CD8-positive, alpha-beta T cell (primary cell): ENCODE measurements at regions of chr9 and their contacts with region 1.

Region 1: GRCh38 chr9:91775011-91775707 is 174.9 kb downstream of the ROR2 start:
- DNase-seq: peak; percentile 39 to 79 (median 61)
- ATAC-seq: peak; percentile 73
- H3K4me3 ChIP-seq: no peak overlapping the region
- H3K4me3 Mint-ChIP-seq: no peak overlapping the region
- H3K27ac ChIP-seq: no peak overlapping the region
- H3K27ac Mint-ChIP-seq: no peak overlapping the region
- H3K4me1 ChIP-seq: no peaks in the 10 kb centered on the region
- H3K4me1 Mint-ChIP-seq: no peaks in the 10 kb centered on the region
- H3K27me3 ChIP-seq: peaks cover 2 to 5% of the 10 kb centered on the region in 2 experiments
- H3K27me3 Mint-ChIP-seq: peaks cover 30% of the 10 kb centered on the region
- CTCF ChIP-seq: peak; percentile 74

Region 2: DNA sequence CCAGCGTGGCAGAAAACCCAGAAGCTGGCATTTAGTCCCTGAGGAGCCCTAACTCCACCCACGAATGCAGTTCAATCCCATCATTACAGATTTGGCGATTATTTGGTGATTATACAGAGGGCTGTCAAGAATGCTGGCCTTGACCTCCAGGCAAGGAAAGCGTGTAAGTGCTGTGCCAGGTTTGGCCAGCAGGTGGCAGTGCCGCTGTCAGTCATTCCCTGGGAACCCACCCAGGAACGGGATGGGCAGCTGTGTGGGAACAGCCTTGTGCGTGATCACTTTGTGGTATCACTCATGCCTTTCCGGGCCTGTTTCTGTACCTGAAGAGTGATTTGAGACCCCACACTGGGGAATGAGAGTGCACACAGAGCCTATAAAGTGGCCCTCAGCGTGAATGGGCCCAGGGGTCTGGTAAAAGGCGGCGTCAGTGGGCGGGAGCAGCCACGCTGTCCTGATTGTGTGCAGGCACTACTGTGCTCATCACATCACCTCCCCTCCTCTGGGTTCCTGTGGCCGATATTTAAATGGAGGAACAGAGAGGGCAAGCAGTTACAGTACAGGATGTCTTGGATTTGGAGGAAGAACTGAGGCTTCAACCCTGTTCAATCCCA is 40.7 kb before region 1 on chr9:
- CTCF ChIA-PET with region 1: no interaction called
- POLR2A ChIA-PET with region 1: no interaction called
- intact Hi-C with region 1: no loop called
- DNase-seq: peak; percentile 29 to 74 (median 60)
- ATAC-seq: no peak
- H3K4me3 ChIP-seq: no peak overlapping the region
- H3K4me3 Mint-ChIP-seq: no peak overlapping the region
- H3K27ac ChIP-seq: no peak overlapping the region
- H3K27ac Mint-ChIP-seq: no peak overlapping the region
- H3K4me1 ChIP-seq: no peaks in the 10 kb centered on the region
- H3K4me1 Mint-ChIP-seq: no peaks in the 10 kb centered on the region
- H3K27me3 ChIP-seq: no peaks in the 10 kb centered on the region
- H3K27me3 Mint-ChIP-seq: peaks cover 14% of the 10 kb centered on the region
- CTCF ChIP-seq: peak; percentile 98

Region 3: GRCh38 chr9:91884696-91885687 is 109.8 kb after region 1 on chr9:
- CTCF ChIA-PET with region 1: no interaction called
- POLR2A ChIA-PET with region 1: no interaction called
- intact Hi-C with region 1: loop called (anchors 5 to 10 kb)
- DNase-seq: no peak
- ATAC-seq: no peak
- H3K4me3 ChIP-seq: no peak overlapping the region
- H3K4me3 Mint-ChIP-seq: no peak overlapping the region
- H3K27ac ChIP-seq: no peak overlapping the region
- H3K27ac Mint-ChIP-seq: no peak overlapping the region
- H3K4me1 ChIP-seq: no peaks in the 10 kb centered on the region
- H3K4me1 Mint-ChIP-seq: no peaks in the 10 kb centered on the region
- H3K27me3 ChIP-seq: peaks cover 0 to 5% of the 10 kb centered on the region in 2 experiments
- H3K27me3 Mint-ChIP-seq: peaks cover 13% of the 10 kb centered on the region
- CTCF ChIP-seq: no peak

Region 4: GRCh38 chr9:91949946-91950664 is 174.9 kb after region 1 on chr9 and contains the start of gene ROR2:
- CTCF ChIA-PET with region 1: no interaction called
- POLR2A ChIA-PET with region 1: no interaction called
- intact Hi-C with region 1: loop called (anchors 2 kb)
- DNase-seq: peak in 8 of 9 experiments; percentile 6 to 64 (median 36)
- ATAC-seq: peak; percentile 58
- H3K4me3 ChIP-seq: peak within 1 kb of the TSS in 1 of 2 experiments; percentile 26
- H3K4me3 Mint-ChIP-seq: peak within 1 kb of the TSS; percentile 66
- H3K27ac ChIP-seq: no peak within 1 kb of the TSS
- H3K27ac Mint-ChIP-seq: no peak within 1 kb of the TSS
- H3K4me1 ChIP-seq: no peaks in the 10 kb centered on the region
- H3K4me1 Mint-ChIP-seq: peaks cover 8% of the 10 kb centered on the region
- H3K27me3 ChIP-seq: peaks cover 16 to 18% of the 10 kb centered on the region in 2 experiments
- H3K27me3 Mint-ChIP-seq: peaks cover 54% of the 10 kb centered on the region
- CTCF ChIP-seq: no peak
- total RNA-seq, gene ROR2: 0.19 to 0.43 TPM

Region 5: GRCh38 chr9:91978739-91979414 is 203.7 kb after region 1 on chr9:
- CTCF ChIA-PET with region 1: interaction called, 3 read pairs
- POLR2A ChIA-PET with region 1: no interaction called
- intact Hi-C with region 1: loop called in 1 of 2 experiments (anchors 5 kb)
- DNase-seq: peak in 2 of 9 experiments; percentile 12 to 17
- ATAC-seq: no peak
- H3K4me3 ChIP-seq: no peak overlapping the region
- H3K4me3 Mint-ChIP-seq: no peak overlapping the region
- H3K27ac ChIP-seq: no peak overlapping the region
- H3K27ac Mint-ChIP-seq: no peak overlapping the region
- H3K4me1 ChIP-seq: no peaks in the 10 kb centered on the region
- H3K4me1 Mint-ChIP-seq: no peaks in the 10 kb centered on the region
- H3K27me3 ChIP-seq: no peaks in the 10 kb centered on the region
- H3K27me3 Mint-ChIP-seq: peaks cover 8% of the 10 kb centered on the region
- CTCF ChIP-seq: no peak

Region 6: GRCh38 chr9:92634712-92635605 is 859.8 kb after region 1 on chr9:
- CTCF ChIA-PET with region 1: no interaction called
- POLR2A ChIA-PET with region 1: no interaction called
- intact Hi-C with region 1: loop called in 1 of 2 experiments (anchors 10 kb)
- DNase-seq: peak; percentile 31 to 71 (median 54)
- ATAC-seq: peak; percentile 71
- H3K4me3 ChIP-seq: no peak overlapping the region
- H3K4me3 Mint-ChIP-seq: no peak overlapping the region
- H3K27ac ChIP-seq: no peak overlapping the region
- H3K27ac Mint-ChIP-seq: no peak overlapping the region
- H3K4me1 ChIP-seq: no peaks in the 10 kb centered on the region
- H3K4me1 Mint-ChIP-seq: peaks cover 2% of the 10 kb centered on the region
- H3K27me3 ChIP-seq: no peaks in the 10 kb centered on the region
- H3K27me3 Mint-ChIP-seq: no peaks in the 10 kb centered on the region
- CTCF ChIP-seq: peak; percentile 61